HepG2 (cell line): ENCODE measurements at regions of chr17 and their contacts with region 1.

Region 1: GRCh38 chr17:48791128-48792032 is 25.6 kb downstream of the TTLL6 start:
- DNase-seq: peak; percentile 80
- ATAC-seq: peak; percentile 71
- H3K4me3 ChIP-seq: peak overlapping the region; percentile 34 to 70 (median 58)
- H3K27ac ChIP-seq: no peak overlapping the region
- H3K4me1 ChIP-seq: peaks cover 61% of the 10 kb centered on the region
- H3K27me3 ChIP-seq: peaks cover 1 to 11% of the 10 kb centered on the region in 2 experiments; a peak in 2 of 5 replicates
- CTCF ChIP-seq: peak; percentile 93
- EP300 ChIP-seq: no peak
- POLR2A ChIP-seq: no peak
- RAD21 ChIP-seq: peak; percentile 71

Region 2: DNA sequence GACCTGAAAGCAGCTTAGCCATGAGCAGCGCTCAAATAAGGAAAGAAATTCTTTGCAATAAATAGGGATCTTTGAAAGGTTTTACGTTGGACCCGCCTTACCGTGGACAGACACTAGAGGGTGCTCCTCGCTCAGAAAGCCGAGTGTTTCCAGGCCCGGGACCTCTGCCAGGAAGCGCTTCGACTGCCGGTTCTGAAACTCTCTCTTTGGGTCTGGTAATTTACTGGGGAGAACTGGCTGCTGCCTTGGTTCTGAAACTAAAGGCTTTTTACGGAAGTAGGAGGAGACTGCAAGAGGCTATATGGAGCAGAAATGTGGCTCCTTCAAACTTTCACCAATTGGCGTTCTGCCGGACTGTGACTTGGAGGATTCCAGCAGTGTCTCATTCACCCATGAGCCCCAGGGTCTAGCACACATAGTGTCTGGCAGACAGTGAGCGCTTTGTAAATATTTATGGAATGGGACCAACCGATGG is 119.6 kb before region 1 on chr17:
- CTCF ChIA-PET with region 1: interaction called, 19 read pairs
- POLR2A ChIA-PET with region 1: no interaction called
- in situ Hi-C with region 1: loop called (anchors 5 kb)
- intact Hi-C with region 1: loop called (anchors 1 kb)
- DNase-seq: peak; percentile 61
- ATAC-seq: peak; percentile 94
- H3K4me3 ChIP-seq: peak overlapping the region; percentile 46 to 64 (median 46)
- H3K27ac ChIP-seq: no peak overlapping the region
- H3K4me1 ChIP-seq: peaks cover 10% of the 10 kb centered on the region
- H3K27me3 ChIP-seq: peaks cover 0 to 19% of the 10 kb centered on the region in 2 experiments; a peak in 2 of 5 replicates
- CTCF ChIP-seq: peak; percentile 92
- EP300 ChIP-seq: no peak
- POLR2A ChIP-seq: no peak
- RAD21 ChIP-seq: peak; percentile 80

Region 3: GRCh38 chr17:48678141-48678971 is 113.0 kb before region 1 on chr17:
- CTCF ChIA-PET with region 1: interaction called, 18 read pairs
- POLR2A ChIA-PET with region 1: no interaction called
- in situ Hi-C with region 1: loop called (anchors 5 kb)
- intact Hi-C with region 1: loop called (anchors 2 kb)
- DNase-seq: peak; percentile 48
- ATAC-seq: peak; percentile 98
- H3K4me3 ChIP-seq: peak overlapping the region in 1 of 3 experiments; percentile 51; a peak in 1 of 6 replicates
- H3K27ac ChIP-seq: no peak overlapping the region
- H3K4me1 ChIP-seq: 0 out of 2 replicates have a peak, but pooled peaks cover 9% of the 10 kb centered on the region
- H3K27me3 ChIP-seq: peaks cover 0 to 26% of the 10 kb centered on the region in 2 experiments; a peak in 3 of 5 replicates
- CTCF ChIP-seq: peak; percentile 98
- EP300 ChIP-seq: no peak
- POLR2A ChIP-seq: no peak
- RAD21 ChIP-seq: peak; percentile 94

Region 4: GRCh38 chr17:48724251-48725003 is 67.0 kb before region 1 on chr17:
- CTCF ChIA-PET with region 1: interaction called, 37 read pairs
- POLR2A ChIA-PET with region 1: interaction called, 5 read pairs
- in situ Hi-C with region 1: loop called (anchors 5 kb)
- intact Hi-C with region 1: loop called (anchors 1 kb)
- DNase-seq: peak; percentile 56
- ATAC-seq: peak; percentile 89
- H3K4me3 ChIP-seq: no peak overlapping the region; a peak in 1 of 6 replicates
- H3K27ac ChIP-seq: no peak overlapping the region
- H3K4me1 ChIP-seq: no peaks in the 10 kb centered on the region
- H3K27me3 ChIP-seq: peaks cover 23 to 82% of the 10 kb centered on the region in 2 experiments
- CTCF ChIP-seq: peak; percentile 91
- EP300 ChIP-seq: no peak
- POLR2A ChIP-seq: no peak
- RAD21 ChIP-seq: peak; percentile 69

Region 5: DNA sequence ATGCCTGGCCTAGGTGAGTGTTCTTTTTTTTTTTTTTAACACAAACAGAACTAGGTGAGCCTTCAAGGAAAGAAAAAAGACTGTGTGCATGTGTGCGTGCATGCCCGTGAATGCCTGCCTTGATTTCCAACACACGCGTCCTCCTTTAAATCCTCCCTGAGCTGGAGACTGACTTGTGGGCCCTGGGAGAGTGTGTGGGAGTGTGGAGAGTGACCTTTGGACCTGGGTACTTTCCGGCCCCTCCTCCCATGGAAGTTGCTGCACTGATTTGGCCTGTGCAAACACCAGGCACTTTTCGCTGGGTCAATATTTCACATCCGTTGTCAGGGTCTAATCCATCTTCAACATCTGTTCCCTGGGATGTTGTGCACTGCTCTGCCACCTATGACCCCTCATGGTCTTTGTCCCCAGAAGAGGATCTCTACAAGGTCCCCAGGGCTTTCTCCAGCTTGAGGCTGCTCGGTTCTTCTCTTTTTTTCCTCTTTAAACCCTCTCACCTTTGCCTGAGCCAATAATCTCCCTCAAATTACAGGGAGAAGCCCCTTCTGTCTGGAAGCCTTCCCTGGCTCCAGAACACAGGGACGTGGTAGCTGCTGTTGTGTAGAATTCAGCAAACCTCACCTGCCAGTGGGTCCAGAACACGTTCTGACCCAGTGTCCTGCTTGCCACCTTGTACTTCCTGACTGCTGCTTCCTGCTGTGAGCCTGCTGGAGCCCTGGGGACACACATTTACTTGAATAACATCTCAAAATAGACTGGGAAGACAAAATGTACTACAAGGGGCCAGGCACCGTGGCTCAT is 80.4 kb after region 1 on chr17:
- CTCF ChIA-PET with region 1: no interaction called
- POLR2A ChIA-PET with region 1: interaction called, 13 read pairs
- in situ Hi-C with region 1: no loop called
- intact Hi-C with region 1: no loop called
- DNase-seq: peak; percentile 99
- ATAC-seq: peak; percentile 96
- H3K4me3 ChIP-seq: peak overlapping the region; percentile 17 to 60 (median 25); a peak in 4 of 6 replicates
- H3K27ac ChIP-seq: peak overlapping the region; percentile 97
- H3K4me1 ChIP-seq: peaks cover 64% of the 10 kb centered on the region
- H3K27me3 ChIP-seq: no peaks in the 10 kb centered on the region
- CTCF ChIP-seq: peak; percentile 45; the same call in 1 of the 2 replicates
- EP300 ChIP-seq: peak; percentile 98
- POLR2A ChIP-seq: peak; percentile 56 to 74
- RAD21 ChIP-seq: peak; percentile 45; the same call in 1 of the 2 replicates